Left lung (tissue), 14 donors: ENCODE measurements at regions of chr17 and their contacts with region 1.

Region 1: DNA sequence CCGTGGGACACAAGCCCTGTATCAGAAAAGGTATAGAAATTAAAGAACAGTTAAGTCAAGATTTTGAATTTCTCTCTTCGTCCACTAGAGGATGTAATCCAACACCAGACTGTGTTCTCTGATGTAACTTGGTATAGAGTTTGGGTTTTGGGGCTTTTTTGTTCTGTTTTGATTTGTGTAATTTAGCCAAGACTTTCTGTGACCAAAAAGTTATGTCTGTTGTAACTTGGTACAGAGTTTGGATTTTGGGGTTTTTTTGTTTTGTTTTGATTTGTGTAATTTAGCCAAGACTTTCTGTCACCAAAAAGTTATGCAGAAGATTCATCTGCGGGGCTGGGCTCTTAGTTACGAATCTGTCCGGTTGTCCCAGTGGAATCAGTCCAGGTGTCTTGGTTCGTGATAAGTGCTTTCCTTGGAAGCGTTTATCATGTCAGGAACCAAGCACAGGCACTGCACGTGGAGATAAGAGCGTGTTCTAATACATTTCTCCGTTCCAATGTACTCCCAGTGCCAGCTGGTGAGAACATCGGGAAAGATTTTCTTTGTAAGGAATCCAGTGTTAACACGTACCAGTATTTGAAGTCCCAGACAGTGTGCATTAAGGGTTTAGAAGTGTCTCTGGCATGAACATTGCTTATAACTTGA is 44.1 kb upstream of the SEC14L1 start:
- DNase-seq: peak in 1 of 4 donors; percentile 62
- ATAC-seq: peak; percentile 58
- H3K4me3 ChIP-seq: no peak overlapping the region
- H3K27ac ChIP-seq: peak overlapping the region; percentile 10 to 90
- H3K4me1 ChIP-seq: peaks cover 28 to 67% of the 10 kb centered on the region in 2 donors
- H3K27me3 ChIP-seq: no peaks in the 10 kb centered on the region
- CTCF ChIP-seq: peak; percentile 34 to 66

Region 2: GRCh38 chr17:76994237-76994637 is 102.5 kb before region 1 on chr17:
- intact Hi-C with region 1: no loop called
- DNase-seq: no peak
- ATAC-seq: no peak
- H3K4me3 ChIP-seq: no peak overlapping the region
- H3K27ac ChIP-seq: peak overlapping the region in 1 of 2 donors; percentile 2
- H3K4me1 ChIP-seq: no peaks in the 10 kb centered on the region
- H3K27me3 ChIP-seq: peaks cover 0 to 29% of the 10 kb centered on the region in 2 donors
- CTCF ChIP-seq: no peak

Region 3: DNA sequence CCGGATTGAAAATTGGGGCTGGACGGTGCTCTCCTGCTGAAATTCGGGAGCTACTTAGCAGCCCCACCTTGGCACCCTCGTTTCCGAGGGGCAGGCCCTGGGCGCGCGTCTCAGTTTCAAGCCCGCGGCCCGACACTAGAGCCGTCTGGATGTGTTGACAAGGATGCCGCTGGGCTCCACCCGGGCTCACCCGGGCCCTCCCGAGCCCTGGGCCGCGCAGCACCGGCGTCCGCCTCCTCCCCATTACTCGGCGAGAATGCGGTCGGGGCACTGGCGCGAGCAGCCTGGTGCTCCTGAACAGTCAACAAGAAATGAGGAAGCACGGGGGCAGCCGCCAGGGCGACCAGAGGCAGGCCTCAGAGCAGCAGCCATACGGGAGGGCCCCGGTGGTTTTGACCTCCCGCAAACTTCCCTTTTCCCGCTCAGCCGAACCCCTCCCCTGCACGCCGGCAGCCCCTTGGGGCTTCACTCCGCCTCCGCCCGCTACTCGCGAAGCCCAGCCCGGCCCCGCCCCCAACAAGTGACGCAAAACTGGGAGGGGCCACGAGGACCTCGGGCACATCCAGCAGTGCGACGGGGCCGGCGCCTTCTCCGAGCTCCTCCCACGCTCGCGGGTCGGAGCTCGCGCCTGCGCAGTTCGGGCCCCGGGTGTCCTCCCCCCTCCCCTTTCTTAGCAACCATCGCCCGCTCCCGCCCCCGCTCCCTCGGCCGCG is 43.6 kb after region 1 on chr17:
- intact Hi-C with region 1: loop called in 1 of 2 experiments (anchors 10 kb)
- DNase-seq: peak; percentile 99 to 100 (median 100)
- ATAC-seq: peak; percentile 98
- H3K4me3 ChIP-seq: peak overlapping the region; percentile 29 to 78
- H3K27ac ChIP-seq: peak overlapping the region; percentile 93 to 99
- H3K4me1 ChIP-seq: peaks cover 5 to 70% of the 10 kb centered on the region in 2 donors
- H3K27me3 ChIP-seq: no peaks in the 10 kb centered on the region
- CTCF ChIP-seq: peak in 1 of 2 donors; percentile 20

Region 4: GRCh38 chr17:77190576-77190975 is 93.9 kb after region 1 on chr17:
- intact Hi-C with region 1: loop called in 1 of 2 experiments (anchors 10 kb)
- DNase-seq: no peak
- ATAC-seq: no peak
- H3K4me3 ChIP-seq: no peak overlapping the region
- H3K27ac ChIP-seq: no peak overlapping the region
- H3K4me1 ChIP-seq: peaks cover 0 to 45% of the 10 kb centered on the region in 2 donors
- H3K27me3 ChIP-seq: no peaks in the 10 kb centered on the region
- CTCF ChIP-seq: no peak

Region 5: GRCh38 chr17:77208217-77208808 is 111.6 kb after region 1 on chr17:
- intact Hi-C with region 1: loop called in 1 of 2 experiments (anchors 10 kb)
- DNase-seq: peak in 1 of 4 donors; percentile 55
- ATAC-seq: peak; percentile 60
- H3K4me3 ChIP-seq: no peak overlapping the region
- H3K27ac ChIP-seq: peak overlapping the region; percentile 35 to 57
- H3K4me1 ChIP-seq: peaks cover 0 to 52% of the 10 kb centered on the region in 2 donors
- H3K27me3 ChIP-seq: no peaks in the 10 kb centered on the region
- CTCF ChIP-seq: no peak